Vagina (tissue), 2 donors: ENCODE measurements at regions of chr20 and their contacts with region 1.

Region 1: DNA sequence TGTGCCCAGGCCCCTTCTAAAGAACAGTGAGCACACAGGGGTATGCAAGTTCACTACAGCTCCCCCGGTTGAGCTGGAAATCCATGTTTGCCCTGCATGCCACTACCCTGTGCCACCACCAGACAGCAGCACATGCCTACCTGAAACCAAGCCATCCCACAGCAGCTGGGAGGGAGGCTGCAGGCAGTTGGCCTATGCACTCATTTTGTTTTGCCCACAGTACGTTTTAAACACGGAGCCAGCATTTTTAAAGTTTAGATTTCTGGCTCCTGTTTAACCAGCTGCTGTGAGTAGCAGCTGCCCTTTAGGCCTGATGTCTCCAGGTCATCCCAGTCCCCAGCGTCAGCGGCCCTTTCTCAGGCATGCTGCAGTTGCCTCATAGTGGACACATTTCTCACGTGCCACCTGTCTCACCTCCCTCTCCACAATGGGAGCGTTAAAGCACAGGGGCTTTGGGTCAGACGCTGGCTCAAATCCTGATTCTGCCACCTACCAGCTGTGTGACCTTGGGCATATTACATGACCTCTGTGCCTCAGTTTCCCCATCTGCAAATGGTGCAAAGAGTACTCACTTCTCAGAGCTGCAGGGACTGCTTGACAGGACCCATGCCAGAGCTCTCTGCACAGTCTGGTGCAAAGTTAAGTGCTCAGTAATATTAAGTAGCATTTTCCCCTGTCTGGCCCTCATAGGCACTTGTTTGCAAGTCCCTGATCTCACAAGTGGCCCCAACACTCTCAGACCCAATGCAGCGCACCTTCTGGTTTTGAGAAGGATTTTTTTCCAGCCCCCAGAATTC is 8.1 kb upstream of the UBE2V1 start:
- DNase-seq: no peak
- H3K4me3 ChIP-seq: no peak overlapping the region
- H3K27ac ChIP-seq: no peak overlapping the region
- H3K4me1 ChIP-seq: peaks cover 18% of the 10 kb centered on the region
- H3K27me3 ChIP-seq: no peaks in the 10 kb centered on the region
- CTCF ChIP-seq: peak; percentile 49 to 71 (median 64)
- POLR2A ChIP-seq: no peak

Region 2: GRCh38 chr20:50165684-50166554 is 44.8 kb after region 1 on chr20:
- intact Hi-C with region 1: loop called (anchors 5 kb)
- DNase-seq: peak in 1 of 2 donors; percentile 100
- H3K4me3 ChIP-seq: peak overlapping the region; percentile 4 to 34
- H3K27ac ChIP-seq: peak overlapping the region; percentile 91
- H3K4me1 ChIP-seq: peaks cover 39% of the 10 kb centered on the region
- H3K27me3 ChIP-seq: no peaks in the 10 kb centered on the region
- CTCF ChIP-seq: no peak
- POLR2A ChIP-seq: no peak

Region 3: DNA sequence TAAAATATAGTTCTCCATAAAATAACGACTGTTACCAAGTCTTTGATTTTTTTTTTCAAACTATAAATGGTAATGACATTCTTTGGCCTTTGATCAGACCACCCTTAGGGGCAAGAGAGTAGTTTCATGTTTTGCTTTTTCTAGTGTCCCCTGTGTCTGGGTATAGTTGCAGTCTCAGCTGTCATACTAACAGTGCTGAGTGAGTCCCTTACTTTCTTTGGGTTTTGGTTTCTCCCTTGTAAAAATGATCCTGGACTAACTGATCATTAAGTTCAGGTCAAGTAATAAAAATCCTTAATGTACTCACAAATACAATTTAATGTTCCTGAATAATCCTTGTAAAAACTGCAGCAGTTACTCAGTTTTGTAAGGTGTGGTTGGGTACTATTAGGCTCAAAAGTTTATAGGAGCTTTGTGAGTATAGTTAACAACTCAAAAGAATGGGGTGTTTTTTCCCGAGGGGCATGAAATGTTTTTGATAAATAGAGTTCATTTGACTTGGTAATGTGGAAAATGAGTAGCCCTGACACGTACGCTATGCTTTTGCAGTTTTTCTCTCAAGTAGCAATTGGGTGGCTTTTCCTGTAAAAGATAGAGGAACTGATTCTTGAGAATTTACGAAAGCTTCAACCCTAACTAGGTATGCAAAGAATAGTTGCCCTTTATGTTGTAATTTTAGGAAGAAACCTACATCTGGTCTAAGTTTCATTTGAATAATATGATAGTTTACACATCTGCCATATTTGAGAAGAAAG is 395.3 kb after region 1 on chr20:
- intact Hi-C with region 1: no loop called
- DNase-seq: no peak
- H3K4me3 ChIP-seq: no peak overlapping the region
- H3K27ac ChIP-seq: peak overlapping the region; percentile 65
- H3K4me1 ChIP-seq: peaks cover 100% of the 10 kb centered on the region
- H3K27me3 ChIP-seq: no peaks in the 10 kb centered on the region
- CTCF ChIP-seq: no peak
- POLR2A ChIP-seq: no peak